Naive thymus-derived CD4-positive, alpha-beta T cell (primary cell): ENCODE measurements at regions of chr11 and their contacts with region 1.

Region 1: GRCh38 chr11:128323381-128323780 is 264.0 kb downstream of the ETS1 start:
- DNase-seq: peak in 7 of 9 donors; percentile 51 to 69 (median 60)
- ATAC-seq: no peak
- H3K4me3 ChIP-seq: peak overlapping the region; percentile 1
- H3K4me3 Mint-ChIP-seq: peak overlapping the region; percentile 21 to 89 (median 68)
- H3K27ac ChIP-seq: peak overlapping the region; percentile 91
- H3K27ac Mint-ChIP-seq: peak overlapping the region; percentile 95 to 99 (median 96)
- H3K4me1 ChIP-seq: peaks cover 80% of the 10 kb centered on the region in 2 donors
- H3K4me1 Mint-ChIP-seq: peaks cover 57 to 97% (median 87%) of the 10 kb centered on the region in 7 donors
- H3K27me3 ChIP-seq: no peaks in the 10 kb centered on the region
- H3K27me3 Mint-ChIP-seq: no peaks in the 10 kb centered on the region

Region 2: DNA sequence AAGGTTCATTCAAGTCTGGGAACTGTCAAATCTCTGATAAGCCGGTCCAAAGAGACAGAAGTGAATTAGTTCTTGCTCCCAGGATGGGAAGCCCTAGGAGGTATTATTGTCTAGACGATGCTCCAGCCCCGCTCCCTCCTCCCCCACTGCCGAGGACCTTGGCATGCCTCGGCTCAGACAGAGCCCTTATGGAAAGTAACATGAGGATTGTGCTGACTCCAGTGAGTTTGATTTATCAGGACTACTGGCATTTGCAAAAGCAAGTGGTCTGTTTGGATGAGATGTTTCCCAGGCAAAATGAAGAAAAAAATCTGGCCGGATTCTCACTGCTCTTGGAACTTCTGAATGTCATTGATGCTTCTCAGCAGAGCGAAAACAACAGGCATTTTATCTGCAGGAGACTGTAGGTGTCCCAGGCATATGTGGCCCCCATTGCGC is 77.0 kb before region 1 on chr11:
- CTCF ChIA-PET with region 1: no interaction called
- POLR2A ChIA-PET with region 1: no interaction called
- intact Hi-C with region 1: no loop called
- DNase-seq: no peak
- ATAC-seq: no peak
- H3K4me3 ChIP-seq: no peak overlapping the region
- H3K4me3 Mint-ChIP-seq: no peak overlapping the region
- H3K27ac ChIP-seq: no peak overlapping the region
- H3K27ac Mint-ChIP-seq: no peak overlapping the region
- H3K4me1 ChIP-seq: no peaks in the 10 kb centered on the region
- H3K4me1 Mint-ChIP-seq: no peaks in the 10 kb centered on the region
- H3K27me3 ChIP-seq: no peaks in the 10 kb centered on the region
- H3K27me3 Mint-ChIP-seq: peaks cover 0 to 22% (median 5%) of the 10 kb centered on the region in 5 donors

Region 3: GRCh38 chr11:128302425-128303186 is 20.8 kb before region 1 on chr11:
- CTCF ChIA-PET with region 1: interaction called, 21 read pairs
- POLR2A ChIA-PET with region 1: interaction called, 325 read pairs
- intact Hi-C with region 1: loop called (anchors 1 kb)
- DNase-seq: peak; percentile 39 to 97 (median 92)
- ATAC-seq: peak; percentile 92
- H3K4me3 ChIP-seq: peak overlapping the region; percentile 52
- H3K4me3 Mint-ChIP-seq: peak overlapping the region; percentile 81 to 98 (median 93)
- H3K27ac ChIP-seq: peak overlapping the region; percentile 98
- H3K27ac Mint-ChIP-seq: peak overlapping the region; percentile 93 to 100 (median 98)
- H3K4me1 ChIP-seq: peaks cover 83 to 95% of the 10 kb centered on the region in 2 donors
- H3K4me1 Mint-ChIP-seq: peaks cover 52 to 92% (median 88%) of the 10 kb centered on the region in 7 donors
- H3K27me3 ChIP-seq: no peaks in the 10 kb centered on the region
- H3K27me3 Mint-ChIP-seq: no peaks in the 10 kb centered on the region

Region 4: DNA sequence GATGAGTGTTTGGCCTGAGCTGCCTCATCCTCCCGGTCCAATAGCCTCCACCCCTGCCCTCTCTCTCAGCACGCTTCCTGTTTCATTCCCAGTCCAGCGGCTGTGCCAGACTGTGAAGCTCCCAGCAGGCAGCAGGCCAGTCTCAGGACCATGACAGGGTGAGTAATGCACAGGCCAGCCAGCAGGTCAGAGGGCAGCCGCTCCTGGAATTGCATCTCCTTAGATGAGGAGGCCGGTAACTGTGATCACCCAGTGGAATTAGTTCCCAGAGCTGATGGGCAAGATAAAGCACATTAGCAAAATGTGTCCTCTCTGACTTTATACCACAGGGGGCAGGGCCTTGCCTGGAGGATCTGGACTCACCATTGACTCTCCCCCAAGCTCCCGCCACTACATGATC is 12.8 kb after region 1 on chr11:
- CTCF ChIA-PET with region 1: interaction called, 3 read pairs
- POLR2A ChIA-PET with region 1: interaction called, 10 read pairs
- intact Hi-C with region 1: loop called (anchors 1 kb)
- DNase-seq: no peak
- ATAC-seq: no peak
- H3K4me3 ChIP-seq: no peak overlapping the region
- H3K4me3 Mint-ChIP-seq: peak overlapping the region in 1 of 10 donors; percentile 35
- H3K27ac ChIP-seq: no peak overlapping the region
- H3K27ac Mint-ChIP-seq: peak overlapping the region in 4 of 9 donors; percentile 18 to 99 (median 77)
- H3K4me1 ChIP-seq: peaks cover 10 to 38% of the 10 kb centered on the region in 2 donors
- H3K4me1 Mint-ChIP-seq: peaks cover 33 to 92% (median 81%) of the 10 kb centered on the region in 7 donors
- H3K27me3 ChIP-seq: no peaks in the 10 kb centered on the region
- H3K27me3 Mint-ChIP-seq: no peaks in the 10 kb centered on the region

Region 5: DNA sequence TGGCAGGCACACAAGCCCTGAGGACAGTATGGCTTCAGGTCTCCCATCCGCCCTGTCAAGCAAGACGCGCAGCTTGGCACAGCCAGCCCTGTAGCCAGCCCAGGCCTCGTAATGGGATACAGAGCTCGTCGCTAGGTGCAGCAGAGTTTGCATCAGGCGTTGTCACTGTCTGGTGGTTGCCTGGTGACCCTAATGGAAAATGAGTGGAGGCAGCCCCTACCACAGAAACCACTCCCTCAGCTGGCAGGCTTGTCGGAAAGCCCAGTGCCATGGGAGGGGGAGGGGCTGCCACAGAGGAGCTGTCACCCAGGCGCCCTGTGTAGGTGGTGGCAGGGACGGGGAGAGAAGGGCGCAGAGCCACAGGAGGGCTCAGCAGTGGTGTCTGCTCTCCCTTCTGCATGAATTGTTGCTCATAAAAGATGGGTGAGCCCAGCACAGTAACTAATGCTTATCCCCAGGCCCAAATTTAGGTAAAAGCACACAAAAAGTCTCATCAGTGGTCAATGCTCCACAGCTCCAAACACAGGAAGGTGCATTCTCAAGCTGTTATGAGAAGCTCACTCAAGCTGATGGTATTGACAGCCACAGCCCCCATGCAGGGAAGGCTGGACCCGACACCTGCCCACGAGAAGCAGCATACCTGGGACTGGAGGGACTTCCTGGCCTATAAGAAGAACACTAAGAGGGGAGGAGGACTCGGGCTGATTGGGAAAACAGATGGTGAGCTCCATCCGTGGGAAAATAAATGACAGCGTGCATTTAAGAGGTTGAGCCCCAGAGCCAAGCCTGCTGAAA is 99.4 kb after region 1 on chr11:
- CTCF ChIA-PET with region 1: interaction called, 8 read pairs
- POLR2A ChIA-PET with region 1: interaction called, 9 read pairs
- intact Hi-C with region 1: loop called in 1 of 2 experiments (anchors 2 kb)
- DNase-seq: peak; percentile 67 to 94 (median 82)
- ATAC-seq: peak; percentile 96
- H3K4me3 ChIP-seq: peak overlapping the region; percentile 25
- H3K4me3 Mint-ChIP-seq: peak overlapping the region; percentile 50 to 86 (median 68)
- H3K27ac ChIP-seq: peak overlapping the region; percentile 56
- H3K27ac Mint-ChIP-seq: peak overlapping the region; percentile 86 to 98 (median 94)
- H3K4me1 ChIP-seq: peaks cover 17 to 33% of the 10 kb centered on the region in 2 donors
- H3K4me1 Mint-ChIP-seq: peaks cover 30 to 86% (median 66%) of the 10 kb centered on the region in 7 donors
- H3K27me3 ChIP-seq: no peaks in the 10 kb centered on the region
- H3K27me3 Mint-ChIP-seq: no peaks in the 10 kb centered on the region

Region 6: GRCh38 chr11:128506999-128507611 is 183.7 kb after region 1 on chr11:
- CTCF ChIA-PET with region 1: interaction called, 11 read pairs
- POLR2A ChIA-PET with region 1: interaction called, 10 read pairs
- intact Hi-C with region 1: loop called in 1 of 2 experiments (anchors 1 kb)
- DNase-seq: peak in 1 of 9 donors; percentile 60
- ATAC-seq: no peak
- H3K4me3 ChIP-seq: peak overlapping the region; percentile 96
- H3K4me3 Mint-ChIP-seq: peak overlapping the region; percentile 85 to 100 (median 98)
- H3K27ac ChIP-seq: peak overlapping the region; percentile 97
- H3K27ac Mint-ChIP-seq: peak overlapping the region; percentile 87 to 99 (median 97)
- H3K4me1 ChIP-seq: peaks cover 89 to 91% of the 10 kb centered on the region in 2 donors
- H3K4me1 Mint-ChIP-seq: peaks cover 70 to 98% (median 92%) of the 10 kb centered on the region in 7 donors
- H3K27me3 ChIP-seq: no peaks in the 10 kb centered on the region
- H3K27me3 Mint-ChIP-seq: no peaks in the 10 kb centered on the region